IMR-90 (cell line): ENCODE measurements at regions of chr5 and their contacts with region 1.

Region 1: DNA sequence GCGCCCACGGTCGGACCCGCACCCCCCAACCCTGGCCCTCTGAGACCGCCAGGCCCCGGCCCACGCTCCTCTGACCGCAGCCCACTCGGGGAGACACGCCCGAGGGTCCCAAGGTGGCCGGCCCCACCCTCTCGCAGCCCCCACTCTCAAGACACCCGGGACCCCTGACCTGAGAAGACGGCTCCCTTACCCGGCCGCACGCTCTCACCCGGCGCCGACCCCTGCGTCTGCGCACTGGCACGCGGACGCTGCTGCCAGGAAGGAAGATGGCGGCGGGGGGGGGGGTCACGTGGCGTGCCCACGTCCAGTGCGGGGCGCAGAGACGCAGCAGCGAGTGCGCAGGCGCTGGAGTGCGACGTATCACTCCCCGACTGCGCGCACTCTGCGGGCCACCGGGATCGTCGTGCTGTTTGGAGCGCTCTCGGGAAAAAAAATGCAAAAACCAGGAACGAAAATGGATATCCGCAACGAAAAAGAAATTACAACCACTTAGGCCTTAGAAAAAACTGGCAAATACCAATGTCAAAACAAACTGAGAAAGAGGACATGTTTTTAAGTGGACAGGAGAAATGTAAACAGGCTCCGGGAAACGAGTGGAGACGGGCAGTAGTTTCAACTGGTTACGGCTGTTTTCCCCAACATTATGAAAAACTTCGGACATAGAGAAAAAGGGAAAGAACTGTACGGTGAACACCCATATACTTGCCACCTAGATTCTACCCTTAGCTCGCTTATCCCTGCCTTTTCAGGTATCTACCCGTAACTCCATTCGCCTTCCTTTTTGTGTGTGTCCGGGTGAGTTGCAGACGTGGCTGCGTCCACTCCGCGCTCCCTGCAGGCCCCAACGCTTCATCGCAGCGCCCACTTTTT is at the start of gene MRPL36:
- DNase-seq: peak; percentile 85
- ATAC-seq: peak; percentile 82
- H3K4me3 ChIP-seq: peak within 1 kb of the TSS; percentile 98
- H3K27ac ChIP-seq: peak within 1 kb of the TSS; percentile 84
- H3K4me1 ChIP-seq: peaks cover 14% of the 10 kb centered on the region
- H3K27me3 ChIP-seq: no peaks in the 10 kb centered on the region
- CTCF ChIP-seq: no peak
- POLR2A ChIP-seq: peak; percentile 49; the same call in 1 of the 2 replicates
- RAD21 ChIP-seq: no peak
- total RNA-seq, gene MRPL36: 63.9 and 85.9 TPM in 2 replicates

Region 2: GRCh38 chr5:956941-957747 is 842.7 kb before region 1 on chr5:
- CTCF ChIA-PET with region 1: no interaction called
- POLR2A ChIA-PET with region 1: no interaction called
- dilution Hi-C with region 1: no loop called
- in situ Hi-C with region 1: loop called (anchors 25 kb)
- intact Hi-C with region 1: no loop called
- DNase-seq: peak; percentile 90
- ATAC-seq: peak; percentile 87
- H3K4me3 ChIP-seq: no peak overlapping the region
- H3K27ac ChIP-seq: peak overlapping the region; percentile 91
- H3K4me1 ChIP-seq: peaks cover 29% of the 10 kb centered on the region
- H3K27me3 ChIP-seq: peaks cover 45% of the 10 kb centered on the region
- CTCF ChIP-seq: peak; percentile 45
- POLR2A ChIP-seq: no peak
- RAD21 ChIP-seq: no peak

Region 3: GRCh38 chr5:1772634-1773033 is 27.2 kb before region 1 on chr5:
- CTCF ChIA-PET with region 1: no interaction called
- POLR2A ChIA-PET with region 1: interaction called, 3 read pairs
- dilution Hi-C with region 1: no loop called
- in situ Hi-C with region 1: no loop called
- intact Hi-C with region 1: loop called (anchors 2 kb)
- DNase-seq: peak; percentile 66
- ATAC-seq: peak; percentile 92
- H3K4me3 ChIP-seq: no peak overlapping the region
- H3K27ac ChIP-seq: no peak overlapping the region
- H3K4me1 ChIP-seq: peaks cover 2% of the 10 kb centered on the region; the same call in 1 of the 2 replicates
- H3K27me3 ChIP-seq: peaks cover 7% of the 10 kb centered on the region
- CTCF ChIP-seq: peak; percentile 58
- POLR2A ChIP-seq: no peak
- RAD21 ChIP-seq: peak; percentile 67